Activated naive CD4-positive, alpha-beta T cell treated with anti-CD3 and anti-CD28 coated beads, Interleukin-2, amount 10 ng/mL, durations not matched to agents 7 days and 5 days (primary cell): ENCODE measurements at regions of chr2 and their contacts with region 1.

Region 1: DNA sequence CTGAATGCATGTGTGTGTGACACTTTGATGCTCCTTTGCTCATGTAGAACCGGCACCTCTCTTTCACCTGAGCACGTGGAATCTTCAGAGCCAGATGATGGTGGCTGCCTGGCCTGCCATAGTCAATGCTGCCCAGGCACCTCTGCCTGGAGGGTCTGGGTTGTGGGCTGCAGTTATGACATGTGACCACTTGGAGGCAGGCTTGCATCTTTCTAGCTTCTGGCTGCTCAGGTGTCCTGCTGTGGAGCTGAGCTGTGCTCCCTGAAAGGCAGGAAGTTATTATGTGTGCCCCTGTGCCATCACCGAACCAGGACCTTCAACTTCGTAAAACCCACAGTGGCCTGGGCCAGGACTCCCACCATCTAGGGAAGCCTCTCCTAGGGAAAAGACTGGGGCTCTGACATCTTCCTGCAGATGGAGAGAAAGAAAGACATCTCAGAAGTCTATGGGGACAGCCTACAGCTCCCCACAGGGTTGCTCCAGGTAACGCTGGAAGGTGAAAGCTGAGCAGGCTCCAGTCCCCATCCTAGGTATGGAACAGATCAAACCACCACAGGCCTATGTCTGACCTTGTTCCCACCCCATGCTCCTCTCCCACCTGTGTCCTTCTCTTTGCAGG is 30.2 kb downstream of the PSD4 start:
- DNase-seq: peak; percentile 84
- H3K4me3 Mint-ChIP-seq: no peak overlapping the region
- H3K27ac Mint-ChIP-seq: peak overlapping the region; percentile 73
- H3K4me1 Mint-ChIP-seq: peaks cover 25% of the 10 kb centered on the region
- H3K27me3 Mint-ChIP-seq: no peaks in the 10 kb centered on the region

Region 2: DNA sequence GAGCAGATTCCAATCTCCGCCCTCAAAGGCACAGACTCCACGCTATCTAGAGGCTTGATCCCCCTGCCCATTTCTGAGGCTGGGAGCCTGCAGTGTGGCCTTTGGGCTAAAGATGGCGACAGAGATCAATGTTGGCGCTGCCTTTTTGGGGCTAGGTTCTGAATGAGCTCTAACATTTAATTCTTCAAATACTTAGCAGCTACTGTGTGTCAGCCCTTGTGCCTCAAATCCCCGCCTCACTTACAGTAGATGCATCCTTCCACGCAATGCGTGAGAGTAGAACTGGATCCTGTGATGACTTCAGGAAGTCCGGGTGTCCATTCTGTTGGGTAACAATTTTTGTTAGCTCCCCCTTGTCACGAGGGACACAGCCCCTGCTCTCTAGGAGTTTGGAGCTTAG is 123.9 kb before region 1 on chr2:
- CTCF ChIA-PET with region 1: interaction called, 45 read pairs
- DNase-seq: peak; percentile 67
- H3K4me3 Mint-ChIP-seq: no peak overlapping the region
- H3K27ac Mint-ChIP-seq: no peak overlapping the region
- H3K4me1 Mint-ChIP-seq: peaks cover 1% of the 10 kb centered on the region
- H3K27me3 Mint-ChIP-seq: peaks cover 40% of the 10 kb centered on the region

Region 3: GRCh38 chr2:113123726-113124125 is 80.3 kb before region 1 on chr2:
- CTCF ChIA-PET with region 1: no interaction called
- DNase-seq: no peak
- H3K4me3 Mint-ChIP-seq: no peak overlapping the region
- H3K27ac Mint-ChIP-seq: no peak overlapping the region
- H3K4me1 Mint-ChIP-seq: peaks cover 14% of the 10 kb centered on the region
- H3K27me3 Mint-ChIP-seq: peaks cover 43% of the 10 kb centered on the region

Region 4: GRCh38 chr2:113181258-113182051 is 22.6 kb before region 1 on chr2:
- CTCF ChIA-PET with region 1: interaction called, 58 read pairs
- DNase-seq: peak; percentile 49
- H3K4me3 Mint-ChIP-seq: peak overlapping the region; percentile 86
- H3K27ac Mint-ChIP-seq: peak overlapping the region; percentile 88
- H3K4me1 Mint-ChIP-seq: peaks cover 91% of the 10 kb centered on the region
- H3K27me3 Mint-ChIP-seq: no peaks in the 10 kb centered on the region

Region 5: GRCh38 chr2:113233593-113234550 is 29.9 kb after region 1 on chr2:
- CTCF ChIA-PET with region 1: interaction called, 16 read pairs
- DNase-seq: no peak
- H3K4me3 Mint-ChIP-seq: peak overlapping the region; percentile 35
- H3K27ac Mint-ChIP-seq: no peak overlapping the region
- H3K4me1 Mint-ChIP-seq: peaks cover 50% of the 10 kb centered on the region
- H3K27me3 Mint-ChIP-seq: peaks cover 14% of the 10 kb centered on the region

Region 6: GRCh38 chr2:113370478-113371091 is 166.6 kb after region 1 on chr2:
- CTCF ChIA-PET with region 1: interaction called, 17 read pairs
- DNase-seq: peak; percentile 82
- H3K4me3 Mint-ChIP-seq: no peak overlapping the region
- H3K27ac Mint-ChIP-seq: no peak overlapping the region
- H3K4me1 Mint-ChIP-seq: peaks cover 7% of the 10 kb centered on the region
- H3K27me3 Mint-ChIP-seq: peaks cover 15% of the 10 kb centered on the region